ENCODE measurements at regions of chr3 and their contacts with region 1.

Region 1: DNA sequence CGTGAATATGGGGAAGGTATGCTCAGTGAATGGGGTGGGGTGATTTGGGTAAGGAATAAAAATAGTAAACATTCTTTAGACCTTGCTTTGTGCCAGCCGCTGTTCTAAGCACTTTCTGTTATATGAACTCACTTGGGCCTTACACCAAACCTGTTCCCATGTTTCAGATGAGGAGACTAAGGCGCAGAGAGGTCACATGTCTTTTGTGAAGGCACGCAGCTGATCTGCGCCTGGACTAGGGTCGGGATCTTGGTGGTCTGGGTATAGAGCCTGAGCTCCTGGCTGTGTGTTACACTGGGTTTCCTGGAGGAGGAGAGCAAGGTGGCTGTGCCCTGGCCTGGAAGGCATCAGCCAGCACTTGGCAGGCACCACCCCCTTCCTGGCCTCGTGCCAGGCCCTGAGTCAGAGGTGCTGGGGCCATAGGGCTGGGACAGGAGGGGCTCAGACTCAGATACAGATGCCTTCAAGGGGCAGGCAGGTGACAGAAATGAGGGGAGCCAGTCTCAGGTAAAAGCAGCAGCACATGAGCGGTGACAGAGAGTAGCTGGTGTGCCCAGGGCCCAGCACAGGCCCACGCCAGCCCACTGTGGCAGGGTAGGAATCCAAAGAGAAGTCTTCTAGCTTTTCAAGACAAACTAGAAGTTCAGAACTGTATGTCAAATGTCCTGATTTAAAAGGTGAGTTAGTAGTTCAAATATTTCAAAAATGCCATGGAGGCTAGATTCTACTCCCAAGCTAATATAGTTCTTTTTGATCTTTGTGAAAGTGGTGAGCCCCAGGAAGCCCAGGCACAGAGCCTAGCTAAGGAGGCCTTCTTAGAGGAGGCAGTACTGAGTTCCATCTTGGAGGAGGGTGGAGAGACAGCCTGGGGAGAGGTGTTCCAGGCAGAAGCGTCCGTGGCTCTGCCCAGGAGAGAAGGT is 83.1 kb downstream of the DNAJB8 start:
- DNase-seq: peak; percentile 53 to 86
- H3K4me3 ChIP-seq: no peak overlapping the region
- H3K27ac ChIP-seq: peak overlapping the region; percentile 79 to 83
- H3K4me1 ChIP-seq: peaks cover 16 to 47% of the 10 kb centered on the region in 2 donors
- H3K27me3 ChIP-seq: no peaks in the 10 kb centered on the region
- CTCF ChIP-seq: no peak

Region 2: GRCh38 chr3:128075516-128076482 is 307.8 kb before region 1 on chr3:
- intact Hi-C with region 1: loop called (anchors 10 kb)
- DNase-seq: peak in 1 of 2 donors; percentile 91
- H3K4me3 ChIP-seq: peak overlapping the region; percentile 57 to 71
- H3K27ac ChIP-seq: peak overlapping the region; percentile 9 to 53
- H3K4me1 ChIP-seq: peaks cover 0 to 15% of the 10 kb centered on the region in 2 donors
- H3K27me3 ChIP-seq: no peaks in the 10 kb centered on the region
- CTCF ChIP-seq: peak; percentile 91 to 97 (median 96)

Region 3: DNA sequence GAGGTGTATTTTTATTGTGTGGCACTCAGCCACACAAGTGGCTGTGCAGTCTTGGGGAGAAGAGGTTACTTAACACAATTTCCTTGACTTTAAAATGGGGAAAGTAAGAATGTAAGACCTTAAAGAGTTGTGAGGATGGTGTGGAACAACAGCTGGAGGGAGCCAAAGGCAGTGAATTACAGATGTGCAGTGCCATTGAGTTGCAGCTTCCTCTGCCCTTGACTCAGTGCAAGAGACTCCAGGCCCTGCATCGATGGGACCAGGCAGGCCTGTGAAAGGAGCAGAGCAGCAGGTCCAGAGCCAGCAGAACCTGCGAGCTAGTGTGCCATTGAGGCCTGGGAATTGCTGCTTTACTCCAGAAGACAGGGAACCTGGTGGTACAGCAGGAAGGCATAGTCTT is 203.1 kb before region 1 on chr3:
- intact Hi-C with region 1: no loop called
- DNase-seq: no peak
- H3K4me3 ChIP-seq: no peak overlapping the region
- H3K27ac ChIP-seq: no peak overlapping the region
- H3K4me1 ChIP-seq: peaks cover 3 to 5% of the 10 kb centered on the region in 2 donors
- H3K27me3 ChIP-seq: no peaks in the 10 kb centered on the region
- CTCF ChIP-seq: no peak

Region 4: DNA sequence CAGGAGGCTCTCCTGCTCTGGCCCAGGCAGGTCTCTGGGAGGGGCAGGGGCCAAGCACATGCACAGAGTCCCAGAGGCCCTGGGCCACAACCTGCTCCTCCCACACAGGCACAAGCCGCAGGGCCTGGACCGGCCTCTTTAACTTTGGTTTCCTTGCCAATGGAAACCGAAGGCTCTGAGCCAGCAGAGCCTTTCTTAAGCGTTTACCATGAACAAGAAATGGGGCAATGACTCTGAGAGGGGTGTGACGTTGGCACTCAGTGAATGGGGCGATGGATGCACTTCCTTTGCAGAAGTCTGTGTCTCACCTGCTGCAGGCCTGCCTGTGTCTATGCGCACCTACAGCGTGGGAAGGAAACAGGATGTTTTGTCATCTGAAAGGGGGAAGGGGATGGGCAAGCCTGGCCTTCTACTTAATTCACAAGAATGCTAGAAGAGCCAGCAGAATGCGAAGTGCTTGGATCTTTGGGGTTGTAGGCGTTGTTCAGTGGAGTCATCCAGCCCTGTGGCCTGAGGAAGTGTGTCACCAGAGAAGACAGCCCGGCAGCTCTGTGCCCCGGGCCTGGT is 1098.3 kb after region 1 on chr3:
- intact Hi-C with region 1: no loop called
- DNase-seq: peak in 1 of 2 donors; percentile 79
- H3K4me3 ChIP-seq: no peak overlapping the region
- H3K27ac ChIP-seq: peak overlapping the region in 1 of 2 donors; percentile 54
- H3K4me1 ChIP-seq: peaks cover 12 to 17% of the 10 kb centered on the region in 2 donors
- H3K27me3 ChIP-seq: no peaks in the 10 kb centered on the region
- CTCF ChIP-seq: no peak

Measured in ascending aorta (tissue), 2 donors.